ENCODE measurements at regions of chr16 and their contacts with region 1.

Region 1: DNA sequence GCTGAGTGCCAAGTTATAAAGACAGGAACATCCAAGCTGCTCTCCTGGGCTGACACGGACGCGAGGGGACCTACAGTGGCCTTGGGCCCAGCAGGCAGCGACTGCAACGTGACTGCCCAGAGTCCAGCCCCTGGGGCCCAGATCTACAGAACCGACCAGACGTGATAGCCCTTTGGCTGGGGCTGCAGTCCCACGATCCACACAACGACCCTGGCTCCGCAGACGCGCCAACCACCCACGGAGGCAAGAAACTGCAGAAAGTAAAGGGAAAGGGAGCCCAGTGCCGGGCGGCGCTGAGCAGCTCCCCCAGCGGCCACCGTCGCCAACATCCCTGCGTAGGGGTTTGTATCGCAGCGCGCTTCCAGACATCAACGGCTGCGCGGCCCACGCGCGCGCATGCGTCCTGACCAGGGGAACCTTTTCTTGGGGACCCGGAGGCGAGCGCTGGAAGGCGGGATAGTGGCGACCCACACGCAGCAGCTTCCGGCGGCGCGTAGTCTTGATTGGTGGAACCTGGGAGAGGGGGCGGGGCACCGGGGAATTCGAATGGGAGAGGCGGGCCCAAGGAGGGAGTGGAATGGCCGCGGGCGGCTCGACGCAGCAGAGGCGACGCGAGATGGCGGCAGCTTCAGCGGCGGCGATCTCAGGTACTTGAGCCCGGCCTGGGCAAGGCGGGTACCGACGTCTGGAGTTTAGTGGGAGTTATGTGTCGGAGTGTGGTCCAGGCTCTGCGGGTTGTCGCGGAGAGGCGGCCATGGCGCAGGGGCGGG is at the start of gene KIF22:
- DNase-seq: peak; percentile 95 to 99
- H3K4me3 ChIP-seq: peak within 1 kb of the TSS; percentile 92 to 98 (median 96)
- H3K27ac ChIP-seq: peak within 1 kb of the TSS; percentile 67; the same call in 1 of the 2 replicates
- H3K4me1 ChIP-seq: peaks cover 3 to 16% (median 5%) of the 10 kb centered on the region in 4 experiments
- H3K27me3 ChIP-seq: no peaks in the 10 kb centered on the region
- CTCF ChIP-seq: peak; percentile 78 to 84 (median 81)
- EP300 ChIP-seq: peak in 1 of 2 experiments; percentile 79; a peak in 1 of 3 replicates
- POLR2A ChIP-seq: peak; percentile 65 to 88
- RAD21 ChIP-seq: peak; percentile 54 to 67
- total RNA-seq, gene KIF22: 142 and 145 TPM in 2 replicates

Region 2: GRCh38 chr16:29720699-29721098 is 69.7 kb before region 1 on chr16:
- CTCF ChIA-PET with region 1: interaction called, 6 read pairs
- POLR2A ChIA-PET with region 1: interaction called, 10 read pairs
- DNase-seq: no peak
- H3K4me3 ChIP-seq: no peak overlapping the region
- H3K27ac ChIP-seq: no peak overlapping the region
- H3K4me1 ChIP-seq: peaks cover 0 to 10% (median 4%) of the 10 kb centered on the region in 4 experiments; a peak in 5 of 7 replicates
- H3K27me3 ChIP-seq: no peaks in the 10 kb centered on the region
- CTCF ChIP-seq: no peak
- EP300 ChIP-seq: no peak
- POLR2A ChIP-seq: no peak
- RAD21 ChIP-seq: no peak

Region 3: DNA sequence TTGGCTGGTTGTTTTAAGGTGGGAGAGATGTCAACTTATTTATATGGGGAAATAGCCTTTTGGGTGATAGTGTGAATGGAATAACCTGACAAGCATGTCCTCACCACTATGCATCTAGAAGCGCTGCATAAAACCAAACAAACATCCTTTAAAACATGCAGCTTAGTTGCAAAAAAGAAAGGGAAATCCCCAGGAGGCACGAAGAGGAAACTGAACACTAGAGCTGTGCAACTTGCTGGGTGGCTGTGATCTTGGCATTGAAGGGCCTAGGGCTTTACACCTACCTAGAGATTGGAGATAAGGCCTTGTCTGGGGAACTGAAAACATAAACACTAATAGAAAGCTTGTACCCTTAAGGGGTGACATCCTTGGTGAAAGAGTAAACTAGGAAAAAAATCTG is 51.9 kb before region 1 on chr16:
- CTCF ChIA-PET with region 1: interaction called, 6 read pairs
- POLR2A ChIA-PET with region 1: interaction called, 25 read pairs
- DNase-seq: no peak
- H3K4me3 ChIP-seq: no peak overlapping the region
- H3K27ac ChIP-seq: no peak overlapping the region
- H3K4me1 ChIP-seq: no peaks in the 10 kb centered on the region; a peak in 1 of 7 replicates
- H3K27me3 ChIP-seq: no peaks in the 10 kb centered on the region
- CTCF ChIP-seq: no peak
- EP300 ChIP-seq: no peak
- POLR2A ChIP-seq: 0 out of 3 replicates have a peak, but pooled peaks of 1 of the 2 experiments have one; percentile 35
- RAD21 ChIP-seq: no peak

Region 4: GRCh38 chr16:29745853-29746345 is 44.5 kb before region 1 on chr16 and contains the start of gene C16orf54:
- CTCF ChIA-PET with region 1: interaction called, 5 read pairs
- POLR2A ChIA-PET with region 1: interaction called, 25 read pairs
- DNase-seq: peak in 1 of 2 experiments; percentile 65
- H3K4me3 ChIP-seq: no peak within 1 kb of the TSS
- H3K27ac ChIP-seq: no peak within 1 kb of the TSS
- H3K4me1 ChIP-seq: peaks cover 0 to 4% (median 2%) of the 10 kb centered on the region in 4 experiments; a peak in 4 of 7 replicates
- H3K27me3 ChIP-seq: no peaks in the 10 kb centered on the region
- CTCF ChIP-seq: no peak
- EP300 ChIP-seq: no peak
- POLR2A ChIP-seq: no peak
- RAD21 ChIP-seq: no peak
- total RNA-seq, gene C16orf54: not detected in 2 replicates

Region 5: GRCh38 chr16:29770250-29770929 is 20.0 kb before region 1 on chr16:
- CTCF ChIA-PET with region 1: interaction called, 22 read pairs
- POLR2A ChIA-PET with region 1: interaction called, 5 read pairs
- DNase-seq: no peak
- H3K4me3 ChIP-seq: no peak overlapping the region
- H3K27ac ChIP-seq: no peak overlapping the region
- H3K4me1 ChIP-seq: no peaks in the 10 kb centered on the region
- H3K27me3 ChIP-seq: no peaks in the 10 kb centered on the region
- CTCF ChIP-seq: no peak
- EP300 ChIP-seq: no peak
- POLR2A ChIP-seq: no peak
- RAD21 ChIP-seq: no peak

Region 6: DNA sequence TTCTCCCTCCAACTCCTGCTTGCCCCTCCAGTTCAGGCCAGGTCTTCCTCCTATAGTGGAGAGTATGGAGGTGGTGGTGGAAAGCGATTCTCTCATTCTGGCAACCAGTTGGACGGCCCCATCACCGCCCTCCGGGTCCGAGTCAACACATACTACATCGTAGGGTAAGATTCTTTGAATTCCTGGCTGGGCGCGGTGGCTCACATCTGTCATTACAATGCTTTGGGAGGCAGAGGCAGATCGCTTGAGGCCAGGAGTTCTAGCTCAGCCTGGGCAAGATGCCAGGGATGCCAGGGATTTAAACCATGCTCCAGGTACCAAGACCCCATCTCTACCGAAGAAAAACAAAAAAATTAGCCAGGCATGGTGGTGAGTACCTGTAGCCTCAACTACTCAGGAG is 10.9 kb before region 1 on chr16:
- CTCF ChIA-PET with region 1: interaction called, 15 read pairs
- POLR2A ChIA-PET with region 1: interaction called, 16 read pairs
- DNase-seq: no peak
- H3K4me3 ChIP-seq: no peak overlapping the region
- H3K27ac ChIP-seq: no peak overlapping the region
- H3K4me1 ChIP-seq: no peaks in the 10 kb centered on the region
- H3K27me3 ChIP-seq: peaks cover 0 to 2% (median 0%) of the 10 kb centered on the region in 4 experiments; a peak in 2 of 7 replicates
- CTCF ChIP-seq: no peak
- EP300 ChIP-seq: no peak
- POLR2A ChIP-seq: no peak
- RAD21 ChIP-seq: no peak

Region 7: DNA sequence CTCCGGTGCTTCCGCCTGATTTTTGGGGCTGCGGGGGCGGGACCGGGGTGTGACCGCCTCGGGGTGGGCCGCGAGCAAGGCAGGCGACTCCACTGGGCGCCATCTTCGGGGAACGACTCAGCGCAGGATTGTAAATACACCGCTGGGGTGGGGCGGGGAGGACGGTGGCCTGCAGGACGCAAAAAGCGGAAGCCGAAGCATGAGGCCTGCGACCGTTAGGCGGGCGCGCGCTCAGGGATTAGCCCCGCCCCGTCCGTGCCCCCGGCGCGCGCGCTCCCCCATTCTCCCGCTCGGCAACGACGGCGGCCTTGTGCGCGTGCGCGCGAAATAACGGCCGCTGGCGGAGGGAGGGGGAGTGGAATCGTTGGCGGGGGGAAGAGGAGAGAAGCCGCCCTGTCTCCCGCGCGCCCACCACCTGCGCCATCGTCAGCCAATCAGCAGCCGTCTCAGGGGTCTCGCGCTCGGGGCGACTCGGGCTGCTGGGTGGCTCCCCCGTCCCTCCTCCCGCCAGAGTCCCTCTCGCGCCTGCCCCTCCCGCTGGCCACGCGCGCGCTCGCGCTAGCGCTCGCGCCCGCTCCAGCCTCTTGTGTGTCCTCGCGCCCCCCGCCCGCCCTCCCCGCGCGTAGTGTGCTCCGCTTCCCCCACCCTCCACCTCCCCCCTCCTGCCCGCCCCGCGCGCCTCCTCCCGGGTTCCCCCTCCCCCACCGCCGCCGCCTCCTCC is 15.2 kb after region 1 on chr16:
- CTCF ChIA-PET with region 1: interaction called, 23 read pairs
- POLR2A ChIA-PET with region 1: interaction called, 58 read pairs
- DNase-seq: peak; percentile 92 to 96
- H3K4me3 ChIP-seq: peak overlapping the region; percentile 54 to 79 (median 72)
- H3K27ac ChIP-seq: peak overlapping the region; percentile 86
- H3K4me1 ChIP-seq: peaks cover 0 to 35% (median 25%) of the 10 kb centered on the region in 4 experiments; a peak in 6 of 7 replicates
- H3K27me3 ChIP-seq: no peaks in the 10 kb centered on the region
- CTCF ChIP-seq: no peak
- EP300 ChIP-seq: 0 out of 3 replicates have a peak, but pooled peaks of 1 of the 2 experiments have one; percentile 6
- POLR2A ChIP-seq: peak in 1 of 2 experiments; percentile 76; a peak in 2 of 3 replicates
- RAD21 ChIP-seq: no peak; a peak in 1 of 4 replicates

Region 8: GRCh38 chr16:29825145-29826044 is 35.0 kb after region 1 on chr16:
- CTCF ChIA-PET with region 1: no interaction called
- POLR2A ChIA-PET with region 1: no interaction called
- DNase-seq: no peak
- H3K4me3 ChIP-seq: no peak overlapping the region
- H3K27ac ChIP-seq: no peak overlapping the region; the same call in 1 of the 2 replicates
- H3K4me1 ChIP-seq: peaks cover 0 to 8% (median 3%) of the 10 kb centered on the region in 4 experiments; a peak in 5 of 7 replicates
- H3K27me3 ChIP-seq: 0 out of 7 replicates have a peak, but pooled peaks cover 0 to 3% (median 0%) of the 10 kb centered on the region in 4 experiments
- CTCF ChIP-seq: no peak
- EP300 ChIP-seq: no peak
- POLR2A ChIP-seq: no peak
- RAD21 ChIP-seq: no peak